ENCODE measurements at regions of chr1 and their contacts with region 1.

Region 1: GRCh38 chr1:46254668-46255067 is 7.1 kb downstream of the RAD54L start:
- DNase-seq: no peak
- H3K4me3 ChIP-seq: no peak overlapping the region
- H3K27ac ChIP-seq: no peak overlapping the region
- H3K4me1 ChIP-seq: no peaks in the 10 kb centered on the region
- H3K27me3 ChIP-seq: no peaks in the 10 kb centered on the region
- CTCF ChIP-seq: no peak
- EP300 ChIP-seq: no peak
- POLR2A ChIP-seq: no peak
- RAD21 ChIP-seq: no peak

Region 2: DNA sequence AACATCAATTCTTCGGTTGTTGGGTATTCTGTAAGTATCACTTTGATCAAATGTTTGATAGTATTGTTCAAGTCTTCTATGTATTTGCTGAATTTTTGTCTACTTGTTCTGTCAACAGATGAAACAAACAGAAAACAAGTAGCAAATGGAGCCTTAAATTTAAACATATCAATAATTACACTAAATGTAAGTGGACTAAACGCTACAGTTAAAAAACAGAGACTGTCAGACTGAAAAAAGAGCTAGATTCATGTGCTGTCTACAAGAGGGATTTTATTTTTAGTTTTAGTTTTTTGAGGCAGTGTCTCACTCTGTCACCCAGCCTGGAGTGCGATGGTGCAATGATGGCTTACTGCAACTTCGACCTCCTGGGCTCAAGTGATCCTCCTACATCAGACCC is 17.8 kb before region 1 on chr1:
- CTCF ChIA-PET with region 1: no interaction called
- POLR2A ChIA-PET with region 1: no interaction called
- DNase-seq: no peak
- H3K4me3 ChIP-seq: no peak overlapping the region
- H3K27ac ChIP-seq: no peak overlapping the region
- H3K4me1 ChIP-seq: no peaks in the 10 kb centered on the region
- H3K27me3 ChIP-seq: no peaks in the 10 kb centered on the region
- CTCF ChIP-seq: no peak
- EP300 ChIP-seq: no peak
- POLR2A ChIP-seq: no peak
- RAD21 ChIP-seq: no peak

Region 3: DNA sequence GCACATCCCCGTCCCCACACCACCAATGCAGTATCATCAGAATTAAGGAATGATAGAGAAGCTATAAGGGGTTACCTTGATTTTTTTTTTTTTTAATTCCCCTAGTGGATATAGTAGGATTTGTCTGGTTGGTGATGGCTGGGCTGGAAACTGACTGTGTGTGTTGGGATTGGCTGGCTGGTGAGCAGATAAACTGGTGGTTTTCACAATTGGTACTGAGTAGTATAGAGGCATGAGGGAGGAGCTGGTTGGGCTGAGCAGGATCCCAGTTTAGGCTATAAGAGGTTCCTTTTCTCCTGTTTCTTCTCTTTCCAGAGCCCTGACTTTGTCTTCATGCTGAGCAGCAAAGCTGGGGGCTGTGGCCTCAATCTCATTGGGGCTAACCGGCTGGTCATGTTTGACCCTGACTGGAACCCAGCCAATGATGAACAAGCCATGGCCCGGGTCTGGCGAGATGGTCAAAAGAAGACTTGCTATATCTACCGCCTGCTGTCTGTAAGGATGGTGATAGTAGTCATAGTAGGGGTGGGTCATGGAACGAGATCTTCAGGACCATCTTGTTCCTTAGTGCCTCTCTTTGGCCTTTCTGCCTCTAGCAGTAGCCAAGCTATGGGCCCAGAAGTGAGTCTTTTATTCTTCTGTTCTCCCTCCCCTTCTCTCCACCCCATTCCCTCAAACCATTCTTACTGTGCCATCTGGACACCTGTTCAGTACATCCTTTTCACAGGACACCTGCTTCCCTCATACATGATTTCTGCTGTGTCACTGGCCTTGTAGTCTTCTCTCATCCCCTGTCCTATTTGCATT is 19.8 kb after region 1 on chr1:
- CTCF ChIA-PET with region 1: no interaction called
- POLR2A ChIA-PET with region 1: interaction called, 100 read pairs
- DNase-seq: no peak
- H3K4me3 ChIP-seq: no peak overlapping the region
- H3K27ac ChIP-seq: no peak overlapping the region
- H3K4me1 ChIP-seq: no peaks in the 10 kb centered on the region
- H3K27me3 ChIP-seq: no peaks in the 10 kb centered on the region
- CTCF ChIP-seq: no peak
- EP300 ChIP-seq: no peak
- POLR2A ChIP-seq: no peak
- RAD21 ChIP-seq: no peak

Region 4: GRCh38 chr1:46285730-46286477 is 31.2 kb after region 1 on chr1:
- CTCF ChIA-PET with region 1: interaction called, 3 read pairs
- POLR2A ChIA-PET with region 1: interaction called, 13 read pairs
- DNase-seq: peak in 1 of 2 experiments; percentile 25
- H3K4me3 ChIP-seq: no peak overlapping the region
- H3K27ac ChIP-seq: no peak overlapping the region
- H3K4me1 ChIP-seq: no peaks in the 10 kb centered on the region; a peak in 1 of 7 replicates
- H3K27me3 ChIP-seq: no peaks in the 10 kb centered on the region
- CTCF ChIP-seq: no peak
- EP300 ChIP-seq: no peak
- POLR2A ChIP-seq: no peak
- RAD21 ChIP-seq: no peak

Measured in H1 (cell line).